MCF 10A (cell line): ENCODE measurements at regions of chr3 and their contacts with region 1.

Region 1: GRCh38 chr3:123328851-123329635 is 119.8 kb downstream of the ADCY5 start:
- DNase-seq: peak; percentile 64
- H3K4me3 Mint-ChIP-seq: no peak overlapping the region
- H3K27ac Mint-ChIP-seq: no peak overlapping the region
- H3K4me1 Mint-ChIP-seq: peaks cover 8% of the 10 kb centered on the region
- H3K27me3 Mint-ChIP-seq: peaks cover 35% of the 10 kb centered on the region
- CTCF ChIP-seq: peak; percentile 87

Region 2: GRCh38 chr3:123290962-123291361 is 38.1 kb before region 1 on chr3:
- CTCF ChIA-PET with region 1: no interaction called
- POLR2A ChIA-PET with region 1: no interaction called
- intact Hi-C with region 1: no loop called
- DNase-seq: no peak
- H3K4me3 Mint-ChIP-seq: no peak overlapping the region
- H3K27ac Mint-ChIP-seq: no peak overlapping the region
- H3K4me1 Mint-ChIP-seq: no peaks in the 10 kb centered on the region
- H3K27me3 Mint-ChIP-seq: peaks cover 74% of the 10 kb centered on the region
- CTCF ChIP-seq: no peak

Region 3: DNA sequence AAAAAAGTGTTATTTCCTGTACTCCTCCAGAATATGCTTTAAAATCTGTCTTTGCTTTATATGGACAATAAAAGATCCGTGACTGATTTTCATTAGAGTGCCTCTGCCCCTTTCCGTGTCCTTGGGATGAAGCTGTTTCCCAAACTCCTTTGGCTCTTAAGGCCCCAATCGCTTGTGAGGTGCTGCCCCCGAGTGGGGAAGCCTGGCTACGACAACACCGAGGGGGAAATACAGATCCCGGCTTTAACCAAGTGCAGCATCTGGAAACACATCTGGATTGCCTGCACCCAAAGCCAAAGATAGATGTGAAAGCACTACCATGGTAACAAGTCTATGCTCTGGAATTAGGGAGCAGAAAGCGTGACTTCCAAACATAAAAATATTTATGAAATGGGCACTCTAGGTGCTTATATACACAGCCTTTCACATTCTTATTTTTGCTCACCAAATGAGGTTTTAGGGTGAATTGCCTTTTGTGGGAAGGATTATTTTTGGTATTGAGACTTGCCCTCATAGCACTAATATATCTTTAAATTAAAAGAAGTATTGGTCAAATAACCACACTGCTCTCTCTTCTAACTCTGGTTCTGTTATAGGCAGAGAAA is 160.5 kb after region 1 on chr3:
- CTCF ChIA-PET with region 1: interaction called, 18 read pairs
- POLR2A ChIA-PET with region 1: interaction called, 3 read pairs
- intact Hi-C with region 1: loop called (anchors 1 kb)
- DNase-seq: peak; percentile 61
- H3K4me3 Mint-ChIP-seq: no peak overlapping the region
- H3K27ac Mint-ChIP-seq: no peak overlapping the region
- H3K4me1 Mint-ChIP-seq: no peaks in the 10 kb centered on the region
- H3K27me3 Mint-ChIP-seq: no peaks in the 10 kb centered on the region
- CTCF ChIP-seq: peak; percentile 78